Testis (tissue), 5 donors: ENCODE measurements at regions of chr7 and their contacts with region 1.

Region 1: DNA sequence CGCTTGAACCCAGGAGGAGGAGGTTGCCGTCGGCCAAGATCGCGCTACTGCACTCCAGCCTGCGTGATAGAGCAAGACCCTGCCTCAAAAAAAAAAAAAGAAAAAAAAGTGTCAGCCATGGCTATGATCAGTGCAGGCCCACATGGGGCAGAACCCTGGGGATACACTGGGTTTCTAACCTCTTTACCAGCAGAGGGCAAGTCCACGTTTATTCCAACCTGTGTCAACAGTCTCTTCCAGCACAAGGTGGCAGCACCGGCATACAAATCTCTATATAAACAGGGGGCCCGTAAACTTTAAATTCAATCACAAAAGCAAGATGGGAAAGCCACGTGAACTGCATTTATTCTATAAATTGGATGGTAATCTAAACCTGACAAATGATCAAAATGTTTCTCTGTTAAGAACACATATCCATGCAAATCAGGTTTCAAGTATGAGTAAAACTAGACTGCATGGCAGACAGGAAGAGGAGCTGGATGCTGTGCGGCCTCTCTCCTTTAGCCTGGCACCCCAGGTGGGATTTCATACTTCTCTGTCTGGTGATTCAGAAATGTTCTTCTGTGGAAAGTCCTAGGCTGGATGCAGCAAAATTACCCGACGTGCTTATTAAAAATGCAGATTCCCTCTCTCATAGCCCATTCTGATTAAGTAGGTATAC is 60.0 kb upstream of the STEAP1B start:
- DNase-seq: peak; percentile 86
- H3K4me3 ChIP-seq: no peak overlapping the region
- H3K27ac ChIP-seq: no peak overlapping the region
- H3K4me1 ChIP-seq: peaks cover 21% of the 10 kb centered on the region
- H3K27me3 ChIP-seq: no peaks in the 10 kb centered on the region
- CTCF ChIP-seq: peak; percentile 76 to 91 (median 85)
- POLR2A ChIP-seq: no peak

Region 2: GRCh38 chr7:23055582-23056178 is 495.7 kb after region 1 on chr7:
- intact Hi-C with region 1: loop called (anchors 5 kb)
- DNase-seq: peak; percentile 51
- H3K4me3 ChIP-seq: no peak overlapping the region
- H3K27ac ChIP-seq: no peak overlapping the region
- H3K4me1 ChIP-seq: no peaks in the 10 kb centered on the region
- H3K27me3 ChIP-seq: no peaks in the 10 kb centered on the region
- CTCF ChIP-seq: peak; percentile 51 to 63 (median 61)
- POLR2A ChIP-seq: no peak